Heart right ventricle (tissue), 16 donors: ENCODE measurements at regions of chr2 and their contacts with region 1.

Region 1: DNA sequence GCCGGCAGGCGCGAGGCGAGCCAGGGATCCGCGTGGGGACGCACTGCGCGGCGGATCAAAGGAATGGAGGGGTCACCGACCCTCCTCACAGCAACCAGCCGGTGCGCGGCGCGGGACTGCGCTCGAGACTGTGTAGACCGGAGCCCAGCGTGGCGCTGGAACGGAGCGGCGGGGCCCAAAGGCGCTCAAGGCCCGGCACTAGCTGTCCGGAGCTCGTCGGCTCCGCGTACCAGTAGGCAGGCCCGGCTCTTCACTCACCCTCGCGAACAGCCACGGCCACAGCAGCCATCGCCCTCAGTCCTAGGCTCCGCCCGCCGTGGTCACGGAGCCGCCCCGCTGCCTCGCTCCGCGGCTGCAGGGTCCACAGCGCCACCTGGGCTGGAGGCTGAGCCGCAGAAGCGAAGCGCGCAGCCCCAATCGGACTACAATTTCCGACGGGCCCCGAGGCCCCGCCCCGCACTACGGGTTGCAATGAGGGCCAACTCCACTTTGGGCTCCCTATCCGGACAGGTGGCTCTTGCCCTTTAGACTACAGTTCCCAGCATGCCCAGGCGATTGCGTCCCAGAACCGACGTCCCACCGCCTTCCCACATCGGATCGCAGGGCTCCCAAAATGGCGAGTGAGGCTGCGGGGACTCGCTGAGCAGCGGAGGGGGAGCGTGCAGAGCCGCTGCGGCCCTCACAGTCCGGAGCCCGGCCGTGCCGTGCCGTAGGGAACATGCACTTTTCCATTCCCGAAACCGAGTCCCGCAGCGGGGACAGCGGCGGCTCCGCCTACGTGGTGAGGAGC is at the starts of genes EIF2B4 and SNX17:
- DNase-seq: peak; percentile 99 to 100
- ATAC-seq: peak; percentile 94 to 97 (median 96)
- H3K4me3 ChIP-seq: peak within 1 kb of the TSS; percentile 54 to 99 (median 92)
- H3K27ac ChIP-seq: peak within 1 kb of the TSS; percentile 77 to 96 (median 93)
- H3K4me1 ChIP-seq: peaks cover 7 to 39% (median 32%) of the 10 kb centered on the region in 9 donors
- H3K27me3 ChIP-seq: no peaks in the 10 kb centered on the region
- CTCF ChIP-seq: peak; percentile 22 to 95 (median 75)
- total RNA-seq, gene EIF2B4: 26.4 to 47.9 (median 34.7) TPM
- total RNA-seq, gene SNX17: 54.5 to 82.5 (median 68.8) TPM

Region 2: GRCh38 chr2:26770986-26771602 is 599.1 kb before region 1 on chr2:
- intact Hi-C with region 1: loop called in 1 of 10 experiments (anchors 10 kb)
- DNase-seq: peak; percentile 71 to 88
- ATAC-seq: peak; percentile 16 to 68 (median 51)
- H3K4me3 ChIP-seq: no peak overlapping the region
- H3K27ac ChIP-seq: peak overlapping the region; percentile 65 to 92 (median 84)
- H3K4me1 ChIP-seq: peaks cover 20 to 86% (median 68%) of the 10 kb centered on the region in 9 donors
- H3K27me3 ChIP-seq: no peaks in the 10 kb centered on the region
- CTCF ChIP-seq: peak in 4 of 9 donors; percentile 27 to 39 (median 36)

Region 3: GRCh38 chr2:27217217-27218121 is 152.8 kb before region 1 on chr2 and contains the start of gene CAD:
- intact Hi-C with region 1: loop called in 1 of 10 experiments (anchors 10 kb)
- DNase-seq: peak; percentile 80 to 87
- ATAC-seq: peak; percentile 87 to 96 (median 93)
- H3K4me3 ChIP-seq: peak within 1 kb of the TSS; percentile 50 to 78 (median 64)
- H3K27ac ChIP-seq: peak within 1 kb of the TSS in 9 of 10 donors; percentile 26 to 83 (median 63)
- H3K4me1 ChIP-seq: peaks cover 4 to 31% (median 26%) of the 10 kb centered on the region in 9 donors
- H3K27me3 ChIP-seq: no peaks in the 10 kb centered on the region
- CTCF ChIP-seq: peak in 5 of 9 donors; percentile 8 to 37 (median 35)
- total RNA-seq, gene CAD: 6.1 to 10.6 (median 7.2) TPM

Region 4: GRCh38 chr2:27322766-27323595 is 47.2 kb before region 1 on chr2 and contains the start of gene MPV17:
- intact Hi-C with region 1: loop called in 2 of 10 experiments (anchors 5 kb)
- DNase-seq: peak; percentile 89 to 93
- ATAC-seq: peak; percentile 87 to 97 (median 94)
- H3K4me3 ChIP-seq: peak within 1 kb of the TSS; percentile 29 to 87 (median 76)
- H3K27ac ChIP-seq: peak within 1 kb of the TSS; percentile 78 to 98 (median 95)
- H3K4me1 ChIP-seq: peaks cover 6 to 41% (median 30%) of the 10 kb centered on the region in 9 donors
- H3K27me3 ChIP-seq: no peaks in the 10 kb centered on the region
- CTCF ChIP-seq: no peak
- total RNA-seq, gene MPV17: 40.8 to 84.9 (median 66.6) TPM

Region 5: GRCh38 chr2:27350106-27350693 is 20.0 kb before region 1 on chr2:
- intact Hi-C with region 1: no loop called
- DNase-seq: no peak
- ATAC-seq: no peak
- H3K4me3 ChIP-seq: no peak overlapping the region
- H3K27ac ChIP-seq: no peak overlapping the region
- H3K4me1 ChIP-seq: peaks cover 0 to 25% (median 13%) of the 10 kb centered on the region in 9 donors
- H3K27me3 ChIP-seq: no peaks in the 10 kb centered on the region
- CTCF ChIP-seq: no peak

Region 6: DNA sequence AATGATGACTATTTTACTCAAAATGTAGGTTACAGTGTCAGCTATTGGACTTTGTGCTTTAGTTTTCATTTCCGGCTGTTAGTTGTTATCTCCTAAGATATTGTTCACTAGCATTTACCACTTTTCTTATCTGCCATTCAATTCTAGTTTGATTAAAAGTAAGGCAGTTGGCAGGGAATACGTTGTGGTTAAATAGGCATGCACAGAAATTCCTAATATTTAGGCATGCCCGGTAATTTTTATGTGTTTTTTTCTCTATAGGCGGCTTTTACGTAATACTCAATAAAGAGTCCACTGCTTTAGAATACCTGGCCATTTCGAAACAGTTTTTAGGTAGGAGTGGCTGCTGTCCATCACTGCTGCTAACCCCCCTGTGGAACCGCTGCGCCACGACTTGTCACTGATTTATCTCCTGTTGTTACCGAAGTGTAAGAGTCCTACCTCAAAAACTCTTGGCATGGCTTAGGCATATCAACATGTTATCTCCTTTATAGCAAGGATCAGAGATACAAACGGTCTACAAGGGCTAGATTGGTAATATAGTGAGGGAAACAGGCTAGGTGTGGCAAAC is 559.8 kb after region 1 on chr2:
- intact Hi-C with region 1: no loop called
- DNase-seq: no peak
- ATAC-seq: no peak
- H3K4me3 ChIP-seq: no peak overlapping the region
- H3K27ac ChIP-seq: no peak overlapping the region
- H3K4me1 ChIP-seq: no peaks in the 10 kb centered on the region
- H3K27me3 ChIP-seq: no peaks in the 10 kb centered on the region
- CTCF ChIP-seq: no peak